Cardiac septum (tissue), 1 donor: ENCODE measurements at regions of chr1 and their contacts with region 1.

Region 1: DNA sequence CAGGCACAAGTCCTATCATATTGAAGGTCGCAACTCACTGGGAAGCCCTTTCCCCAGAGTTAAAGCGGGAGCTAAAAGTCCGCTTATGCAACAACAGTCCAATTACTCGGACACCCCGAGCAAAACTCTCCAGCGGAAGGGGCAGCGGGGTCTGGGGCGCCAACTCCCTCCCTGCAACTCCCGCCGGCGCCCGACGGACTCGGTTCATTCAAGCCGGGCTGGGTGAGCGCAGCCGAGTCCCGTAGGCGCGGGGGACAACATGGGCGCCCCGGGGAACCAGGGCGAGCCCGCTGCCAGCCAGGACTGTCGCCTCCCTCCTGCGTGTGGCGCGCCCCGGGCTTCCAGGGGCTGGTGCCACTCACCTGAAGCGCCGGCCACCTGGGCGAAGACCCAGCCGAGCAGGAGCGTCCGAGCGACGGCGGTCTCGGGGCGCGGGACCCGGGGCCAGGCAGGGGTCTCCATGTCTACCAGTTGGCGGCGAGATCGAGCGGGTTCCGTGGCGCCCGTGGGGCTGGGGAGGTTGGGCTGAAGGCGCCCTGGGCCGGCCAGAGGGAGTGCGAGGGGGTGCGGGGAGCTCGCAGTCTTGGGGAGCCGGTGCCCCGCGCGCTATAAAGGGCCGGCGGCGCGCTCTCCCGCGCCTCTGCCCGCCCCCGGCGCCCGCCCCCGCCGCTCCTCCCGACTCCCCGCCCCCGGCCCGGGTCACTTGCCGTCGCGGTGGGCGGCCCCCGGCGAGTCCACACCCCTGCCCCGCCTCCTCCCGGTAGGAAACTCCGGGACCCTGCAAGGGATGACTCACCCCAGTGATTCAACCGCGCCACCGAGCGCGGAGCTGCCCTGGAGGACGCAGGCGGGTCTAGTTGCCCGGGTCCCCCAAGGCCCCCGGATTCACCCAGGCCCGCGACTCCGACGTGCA is at the start of gene F3:
- DNase-seq: peak; percentile 94
- total RNA-seq, gene F3: 29.1 TPM

Region 2: DNA sequence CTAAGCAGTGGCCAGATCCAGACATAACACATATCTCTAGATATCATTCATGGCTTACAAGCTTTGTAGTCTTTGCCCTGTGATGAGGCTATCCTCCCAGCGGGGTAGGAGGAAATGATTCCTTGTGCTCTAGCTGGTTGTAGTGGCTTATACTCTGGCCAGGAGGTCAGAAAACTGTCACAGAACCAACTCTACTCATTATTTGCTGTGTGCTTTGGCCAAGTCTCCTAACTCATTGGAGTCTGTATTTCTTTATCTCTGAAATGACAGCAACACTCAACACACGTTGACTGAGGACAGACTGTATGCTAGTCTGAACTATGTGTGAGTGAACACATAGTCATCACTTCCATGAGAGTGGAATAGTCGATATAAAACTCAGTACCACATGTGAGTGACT is 116.8 kb after region 1 on chr1:
- intact Hi-C with region 1: loop called (anchors 5 kb)
- DNase-seq: no peak

Region 3: GRCh38 chr1:94734963-94735899 is 193.8 kb after region 1 on chr1:
- intact Hi-C with region 1: loop called (anchors 5 kb)
- DNase-seq: no peak